ENCODE measurements at regions of chr22 and their contacts with region 1.

Region 1: DNA sequence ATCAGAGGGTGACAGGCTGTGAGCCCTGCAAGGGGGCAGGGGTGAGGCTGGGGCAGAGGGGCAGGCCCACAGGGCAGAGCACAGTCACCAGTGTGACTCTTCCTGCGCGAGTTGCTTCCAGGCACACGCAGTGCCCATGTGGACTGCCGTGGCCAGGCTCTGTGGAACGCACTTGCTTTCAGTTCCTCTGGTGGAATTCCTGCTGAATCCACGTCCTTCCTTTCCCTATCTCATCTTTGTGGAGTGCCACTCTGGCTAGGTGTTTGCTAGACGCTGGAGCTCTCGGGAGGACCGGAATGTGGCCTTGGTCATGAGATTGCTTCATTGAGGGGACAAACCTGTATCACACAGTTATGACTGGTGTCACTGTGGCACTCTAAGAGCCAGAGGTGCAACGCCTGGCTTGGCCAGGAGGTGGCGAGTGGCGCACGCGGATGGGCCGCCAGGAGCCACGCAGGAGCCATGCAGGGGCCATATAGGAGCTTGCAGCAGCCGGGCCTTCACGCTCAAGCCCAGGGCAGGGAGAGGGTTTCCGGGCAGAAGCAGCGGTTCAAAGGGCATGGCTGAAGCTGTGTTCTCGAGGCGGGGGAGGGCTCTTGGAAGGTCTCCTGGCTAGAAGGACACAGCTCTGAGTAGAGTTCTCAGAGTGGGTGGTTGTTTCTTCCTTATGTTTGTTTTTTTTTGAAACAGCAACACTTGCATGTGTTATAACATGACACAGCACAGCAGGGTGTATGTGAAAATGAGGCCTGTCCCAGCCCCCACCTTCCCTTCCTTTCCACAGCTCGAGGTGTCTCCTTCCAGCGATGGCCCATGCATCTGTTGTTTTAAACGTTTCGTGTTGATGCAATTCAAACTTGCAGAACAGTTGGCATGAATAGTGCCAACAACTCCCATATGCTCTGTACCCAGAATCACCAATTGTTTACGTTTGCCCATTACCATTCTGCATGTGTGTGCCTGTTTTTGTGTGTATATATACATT is 36.2 kb downstream of the TBC1D22A start:
- DNase-seq: peak in 1 of 2 donors; percentile 80
- H3K4me3 ChIP-seq: no peak overlapping the region
- H3K27ac ChIP-seq: no peak overlapping the region
- H3K4me1 ChIP-seq: peaks cover 0 to 3% of the 10 kb centered on the region in 2 donors
- H3K27me3 ChIP-seq: no peaks in the 10 kb centered on the region
- CTCF ChIP-seq: peak; percentile 86 to 96 (median 95)

Region 2: GRCh38 chr22:46897246-46897623 is 98.6 kb after region 1 on chr22:
- intact Hi-C with region 1: loop called (anchors 5 kb)
- DNase-seq: no peak
- H3K4me3 ChIP-seq: no peak overlapping the region
- H3K27ac ChIP-seq: no peak overlapping the region
- H3K4me1 ChIP-seq: no peaks in the 10 kb centered on the region
- H3K27me3 ChIP-seq: no peaks in the 10 kb centered on the region
- CTCF ChIP-seq: no peak